Activated T-helper 2 cell treated with anti-CD3 and anti-CD28 coated beads, Interferon-gamma antibody, Interleukin-2, Interleukin-4, amounts not matched to agents 10 μg/mL and 5 μg/mL and 100 μg/mL, durations not matched to agents 14 hours and 24 hours and 36 hours (primary cell): ENCODE measurements at regions of chr15 and their contacts with region 1.

Region 1: DNA sequence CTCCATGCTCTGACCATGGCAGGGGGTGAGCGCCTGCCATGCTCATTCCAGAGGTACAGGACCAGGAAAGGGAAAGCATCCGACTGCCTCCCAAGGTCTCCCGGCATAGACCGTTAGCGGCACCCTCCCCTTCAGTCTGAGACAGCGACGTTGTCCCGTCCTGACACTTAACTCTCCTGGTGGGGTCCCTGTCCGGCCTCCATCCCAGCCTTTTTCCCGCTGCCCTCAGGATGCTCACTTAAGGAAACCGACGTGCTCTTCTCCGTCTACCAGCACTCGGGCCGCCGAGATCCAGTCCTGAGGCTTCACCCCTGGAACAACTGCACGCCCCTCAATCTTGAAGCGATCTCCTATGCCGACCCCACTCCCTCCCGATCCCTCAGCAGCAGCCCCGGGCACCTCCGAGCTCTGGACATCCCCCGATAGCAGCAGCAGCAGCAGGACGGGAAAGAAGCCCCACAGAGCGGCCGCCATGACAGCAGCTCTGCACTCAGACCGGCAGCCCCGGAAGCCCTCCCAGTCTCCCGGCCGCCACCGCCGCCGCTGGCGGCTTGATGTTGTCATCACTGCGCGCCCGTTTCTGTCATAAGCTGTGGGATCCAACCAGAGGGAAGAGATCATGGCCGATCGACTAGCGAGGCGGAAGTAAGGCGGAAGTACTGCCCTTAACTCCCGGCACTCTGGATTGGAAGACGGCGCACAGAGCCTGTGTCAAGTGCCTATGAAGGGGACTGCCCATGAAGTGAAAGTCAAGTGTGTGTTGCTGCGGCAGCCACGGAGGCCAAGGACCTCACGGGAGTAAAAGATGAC is at the starts of genes EMC7 and PGBD4:
- DNase-seq: peak; percentile 99
- H3K4me3 Mint-ChIP-seq: peak within 1 kb of the TSS; percentile 100
- H3K27ac Mint-ChIP-seq: peak within 1 kb of the TSS; percentile 96
- H3K4me1 Mint-ChIP-seq: peaks cover 25% of the 10 kb centered on the region
- H3K27me3 Mint-ChIP-seq: no peaks in the 10 kb centered on the region
- total RNA-seq, gene EMC7: 66.8 and 68.0 TPM in 2 replicates
- total RNA-seq, gene PGBD4: 3.4 and 3.7 TPM in 2 replicates

Region 2: GRCh38 chr15:34038023-34038870 is 63.3 kb before region 1 on chr15:
- intact Hi-C with region 1: loop called (anchors 1 kb)
- DNase-seq: peak; percentile 60
- H3K4me3 Mint-ChIP-seq: peak overlapping the region; percentile 94
- H3K27ac Mint-ChIP-seq: peak overlapping the region; percentile 94
- H3K4me1 Mint-ChIP-seq: peaks cover 26% of the 10 kb centered on the region
- H3K27me3 Mint-ChIP-seq: no peaks in the 10 kb centered on the region

Region 3: DNA sequence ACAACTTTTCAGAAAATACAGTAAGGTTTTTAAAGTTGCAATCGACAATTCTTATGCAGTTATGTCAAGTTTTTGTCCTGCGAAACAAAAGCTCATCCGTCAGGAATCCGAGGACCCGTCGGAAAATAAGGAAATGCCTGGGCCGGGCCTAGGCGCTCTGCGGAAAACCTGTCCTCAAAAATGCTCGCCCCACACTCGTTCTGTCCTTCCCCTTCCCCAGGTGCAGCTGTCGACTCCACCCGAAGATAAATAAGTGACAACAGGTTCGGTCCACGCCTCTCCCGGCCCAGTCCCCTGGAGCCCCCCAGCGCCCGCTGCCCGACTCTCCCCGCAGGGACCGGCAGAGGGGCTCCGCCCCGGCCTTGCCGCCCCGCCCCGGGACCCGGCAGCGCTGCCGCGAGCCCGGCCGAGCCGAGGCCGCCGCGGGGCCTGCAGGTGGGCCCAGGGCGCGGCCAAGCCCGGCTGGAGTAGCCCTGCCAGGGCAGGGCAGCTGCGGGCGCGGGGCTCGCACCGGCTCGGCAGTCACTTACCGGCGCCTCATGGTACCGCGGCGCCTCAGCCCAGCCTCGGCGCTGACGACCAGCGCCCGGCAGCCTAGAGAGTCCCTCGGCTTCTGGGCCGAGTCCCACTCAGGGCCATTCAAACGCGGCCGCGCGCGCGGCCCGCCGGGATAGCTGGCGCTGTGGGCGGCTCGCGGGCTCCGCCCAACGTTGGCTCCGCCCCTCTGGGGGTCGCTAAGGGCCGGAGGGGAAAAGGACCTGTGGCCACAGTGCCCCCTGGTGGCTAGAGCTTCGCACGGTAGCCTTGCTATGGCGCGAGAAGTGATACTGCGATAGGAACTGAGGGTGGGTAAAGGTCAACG is 108.1 kb after region 1 on chr15 and contains the start of gene KATNBL1:
- intact Hi-C with region 1: loop called (anchors 1 kb)
- DNase-seq: peak; percentile 89
- H3K4me3 Mint-ChIP-seq: peak within 1 kb of the TSS; percentile 87
- H3K27ac Mint-ChIP-seq: peak within 1 kb of the TSS; percentile 78
- H3K4me1 Mint-ChIP-seq: peaks cover 20% of the 10 kb centered on the region
- H3K27me3 Mint-ChIP-seq: no peaks in the 10 kb centered on the region
- total RNA-seq, gene KATNBL1: 42.0 and 42.3 TPM in 2 replicates

Region 4: DNA sequence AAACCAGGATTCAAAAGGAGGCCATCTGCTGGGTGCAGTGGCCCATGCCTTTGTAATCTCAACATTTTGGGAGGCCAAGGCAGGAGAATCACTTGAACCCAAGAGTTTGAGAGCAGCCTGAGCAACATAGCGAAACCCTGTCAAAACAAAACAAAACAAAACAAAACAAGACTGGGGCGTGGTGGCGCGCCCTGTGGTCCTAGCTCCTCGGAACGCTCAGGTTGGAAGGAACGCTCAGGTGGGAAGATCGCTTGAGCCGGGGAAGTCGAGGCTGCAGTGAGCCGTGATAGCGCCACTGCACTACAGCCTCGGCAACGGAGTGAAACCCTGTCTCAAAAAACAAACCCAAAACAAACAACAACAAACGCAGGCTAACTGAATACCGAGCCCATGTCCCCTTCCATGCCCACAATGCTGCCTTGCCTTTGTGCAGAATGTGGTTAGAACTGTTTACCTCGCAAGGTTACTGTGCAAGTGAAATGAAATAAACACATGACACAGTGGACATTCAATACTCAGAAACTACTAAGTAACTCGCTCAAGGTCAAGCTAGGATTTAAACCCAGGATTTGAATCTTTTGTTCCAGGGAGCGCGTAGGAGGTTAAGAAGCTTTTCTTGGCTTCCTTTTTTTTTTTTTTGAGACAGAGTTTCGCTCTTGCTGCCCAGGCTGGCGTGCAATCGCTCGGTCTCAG is 122.5 kb after region 1 on chr15:
- intact Hi-C with region 1: loop called (anchors 1 kb)
- DNase-seq: no peak
- H3K4me3 Mint-ChIP-seq: peak overlapping the region; percentile 96
- H3K27ac Mint-ChIP-seq: peak overlapping the region; percentile 98
- H3K4me1 Mint-ChIP-seq: peaks cover 28% of the 10 kb centered on the region
- H3K27me3 Mint-ChIP-seq: no peaks in the 10 kb centered on the region

Region 5: DNA sequence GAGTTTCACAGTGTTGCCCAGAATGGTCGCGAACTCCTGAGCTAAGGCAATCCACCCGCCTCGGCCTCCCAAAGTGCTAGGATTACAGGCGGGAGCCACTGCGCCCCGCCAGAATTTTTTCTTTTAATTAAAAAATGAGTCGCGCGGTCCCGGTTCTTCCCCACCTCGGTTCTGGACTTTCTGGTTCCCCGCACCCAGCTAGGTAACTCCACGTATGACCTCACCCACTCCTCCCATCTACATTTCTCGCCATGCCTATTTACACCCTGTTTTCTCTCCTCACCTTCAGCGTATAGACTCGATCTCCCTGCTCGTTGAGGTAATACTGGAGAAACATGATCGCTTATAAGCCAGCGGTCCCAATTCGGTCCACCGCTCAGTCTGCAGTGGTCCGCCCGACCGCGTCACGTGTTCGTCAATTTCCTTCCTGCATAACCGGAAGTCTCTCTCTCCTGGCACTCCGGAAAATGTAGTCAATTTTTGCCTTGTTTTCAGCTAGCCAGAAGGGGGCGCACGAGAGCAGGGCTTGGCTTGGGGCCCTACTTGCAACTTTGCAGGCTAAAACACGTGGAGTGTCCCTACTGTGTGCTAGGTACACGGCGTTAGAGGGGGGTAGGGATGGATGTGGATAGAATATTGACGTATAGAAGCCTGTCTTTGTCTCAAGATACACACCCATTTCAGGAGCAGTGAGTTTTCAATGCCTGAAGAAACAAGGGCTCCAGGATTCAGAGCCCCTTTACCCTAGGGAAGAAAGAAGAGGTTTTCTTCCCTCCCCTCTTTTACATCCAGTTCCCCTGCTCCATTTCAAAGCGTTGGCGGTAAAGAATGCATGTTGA is 241.4 kb after region 1 on chr15 and contains the starts of genes NOP10 and NUTM1:
- intact Hi-C with region 1: loop called (anchors 1 kb)
- DNase-seq: peak; percentile 91
- H3K4me3 Mint-ChIP-seq: no peak within 1 kb of the TSS
- H3K27ac Mint-ChIP-seq: peak within 1 kb of the TSS; percentile 48
- H3K4me1 Mint-ChIP-seq: peaks cover 18% of the 10 kb centered on the region
- H3K27me3 Mint-ChIP-seq: no peaks in the 10 kb centered on the region
- total RNA-seq, gene NOP10: 227 and 232 TPM in 2 replicates
- total RNA-seq, gene NUTM1: not detected in 2 replicates

Region 6: DNA sequence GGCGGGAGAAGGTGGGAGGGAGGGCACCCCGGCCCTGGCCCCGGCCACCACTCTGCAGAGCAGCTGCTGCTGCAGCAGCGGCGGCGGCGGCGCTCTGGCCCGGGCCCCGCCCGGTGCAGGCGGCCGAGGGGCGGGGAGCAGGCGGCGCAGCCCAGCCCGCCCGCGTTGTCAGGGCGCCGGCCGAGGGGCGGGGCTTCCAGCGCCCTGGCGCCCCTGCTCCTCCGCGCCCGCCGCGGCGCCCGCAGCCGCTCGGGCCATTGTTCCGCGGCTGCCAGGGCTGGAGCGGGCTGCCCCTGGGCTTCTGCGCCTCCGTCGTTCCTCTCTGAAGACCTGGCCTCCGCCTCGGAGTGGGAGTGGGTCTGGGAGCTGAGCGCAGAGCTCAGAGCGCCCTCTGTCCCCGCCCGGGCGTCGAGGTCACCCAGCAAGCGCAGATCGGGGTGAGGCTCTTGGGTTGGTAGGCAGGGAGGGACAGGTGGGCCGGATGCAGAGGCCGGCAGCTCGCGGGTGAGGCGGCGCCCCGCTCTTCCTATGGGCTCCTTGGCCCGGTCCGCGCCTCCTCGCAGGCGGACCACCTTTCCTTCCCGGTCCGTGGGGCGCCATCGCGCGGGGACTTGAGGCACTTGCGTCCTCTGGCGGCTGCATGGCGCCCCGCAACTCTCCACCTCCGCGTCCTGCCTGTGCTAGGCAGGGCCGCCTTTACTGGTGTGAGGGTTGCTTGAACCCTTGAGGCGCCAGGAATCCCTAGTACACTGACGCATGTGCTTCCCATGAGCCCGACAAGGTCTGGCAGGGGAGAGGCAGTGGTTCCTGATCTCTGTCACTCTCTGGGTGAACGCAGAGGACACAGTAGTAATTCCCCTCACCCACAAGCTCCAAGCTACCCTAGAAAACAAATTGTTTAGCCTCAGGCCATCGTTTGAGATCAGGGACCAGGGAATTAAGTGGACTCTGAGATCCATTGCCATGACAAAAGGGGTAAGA is 265.8 kb after region 1 on chr15 and contains the start of gene LPCAT4:
- intact Hi-C with region 1: loop called (anchors 2 kb)
- DNase-seq: peak; percentile 88
- H3K4me3 Mint-ChIP-seq: peak within 1 kb of the TSS; percentile 98
- H3K27ac Mint-ChIP-seq: peak within 1 kb of the TSS; percentile 97
- H3K4me1 Mint-ChIP-seq: peaks cover 26% of the 10 kb centered on the region
- H3K27me3 Mint-ChIP-seq: no peaks in the 10 kb centered on the region
- total RNA-seq, gene LPCAT4: 70.9 and 76.1 TPM in 2 replicates

Region 7: GRCh38 chr15:34587717-34588674 is 486.4 kb after region 1 on chr15:
- intact Hi-C with region 1: loop called (anchors 5 kb)
- DNase-seq: peak; percentile 55
- H3K4me3 Mint-ChIP-seq: peak overlapping the region; percentile 78
- H3K27ac Mint-ChIP-seq: peak overlapping the region; percentile 7
- H3K4me1 Mint-ChIP-seq: peaks cover 20% of the 10 kb centered on the region
- H3K27me3 Mint-ChIP-seq: peaks cover 17% of the 10 kb centered on the region